ENCODE measurements at regions of chr2 and their contacts with region 1.

Region 1: DNA sequence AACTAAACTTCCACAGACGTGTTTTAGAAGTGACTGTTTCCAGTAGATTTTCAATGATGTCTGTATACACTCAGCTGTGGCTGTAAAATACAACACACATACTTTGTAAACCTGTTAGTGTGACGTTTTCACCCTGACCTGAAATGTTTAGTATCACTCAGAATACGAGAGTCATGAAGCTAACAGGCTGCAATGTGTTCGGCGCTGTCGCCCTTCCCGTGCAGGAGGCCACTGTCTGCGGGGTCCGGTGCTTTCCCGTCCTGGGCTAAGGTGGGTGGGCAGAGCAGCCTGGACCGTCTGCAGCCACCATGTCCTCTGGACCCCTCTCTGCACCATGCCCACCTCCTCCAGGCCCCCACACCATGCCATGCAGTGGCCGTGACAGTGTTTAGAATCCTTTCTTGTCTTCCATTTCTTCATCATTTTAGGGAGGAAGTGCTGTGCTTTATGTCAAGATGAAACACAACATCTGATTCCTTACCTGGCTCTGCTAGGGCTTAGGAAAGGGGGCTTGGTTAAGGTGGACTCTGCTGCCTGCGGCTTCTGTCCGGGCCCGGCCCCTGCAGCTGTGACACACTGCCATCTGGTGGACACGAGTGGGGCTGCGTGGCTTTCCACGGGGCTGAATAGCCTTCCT is 53.8 kb upstream of the RBM44 start:
- DNase-seq: peak; percentile 60 to 81
- H3K4me3 ChIP-seq: no peak overlapping the region
- H3K4me3 Mint-ChIP-seq: no peak overlapping the region
- H3K27ac Mint-ChIP-seq: no peak overlapping the region
- H3K4me1 ChIP-seq: peaks cover 27% of the 10 kb centered on the region
- H3K4me1 Mint-ChIP-seq: peaks cover 25% of the 10 kb centered on the region
- H3K27me3 ChIP-seq: no peaks in the 10 kb centered on the region
- H3K27me3 Mint-ChIP-seq: no peaks in the 10 kb centered on the region
- CTCF ChIP-seq: peak; percentile 77 to 92

Region 2: DNA sequence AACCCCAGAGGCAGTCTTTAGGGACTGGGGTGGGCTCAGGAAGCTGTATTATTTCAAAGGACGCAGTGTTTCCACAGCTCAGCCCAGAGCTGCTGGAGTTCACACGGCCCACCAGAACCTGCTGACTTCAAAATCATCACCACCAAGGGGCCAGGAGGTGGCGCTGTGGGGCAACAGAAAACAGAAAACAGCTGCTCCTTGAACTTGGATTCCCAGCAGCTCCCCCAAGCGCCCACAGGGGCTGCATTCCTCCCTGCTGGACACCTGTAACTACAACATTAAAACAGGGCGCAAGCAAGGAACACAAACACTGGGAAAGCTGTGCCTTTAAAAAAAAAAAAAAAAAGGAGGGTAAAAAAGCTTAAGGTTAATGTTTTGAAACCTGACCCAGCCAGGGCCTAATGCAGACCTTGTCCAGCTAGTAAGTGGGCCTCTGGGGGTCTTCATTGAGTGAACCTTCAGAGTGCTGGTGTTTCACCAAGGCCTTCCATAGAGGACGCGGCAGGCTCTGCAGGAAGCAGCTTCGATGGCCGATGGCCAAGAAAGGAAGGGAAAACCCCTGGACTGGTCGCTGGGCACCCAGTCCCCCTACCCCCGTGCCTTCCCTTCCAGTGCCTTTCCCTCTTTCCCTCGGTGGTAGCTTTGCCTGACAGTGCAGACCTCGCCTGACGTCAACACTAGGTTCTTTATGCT is 231.8 kb before region 1 on chr2:
- CTCF ChIA-PET with region 1: interaction called, 8 read pairs
- POLR2A ChIA-PET with region 1: no interaction called
- intact Hi-C with region 1: loop called (anchors 2 kb)
- DNase-seq: peak; percentile 83 to 84
- H3K4me3 ChIP-seq: no peak overlapping the region
- H3K4me3 Mint-ChIP-seq: no peak overlapping the region
- H3K27ac Mint-ChIP-seq: no peak overlapping the region
- H3K4me1 ChIP-seq: no peaks in the 10 kb centered on the region
- H3K4me1 Mint-ChIP-seq: no peaks in the 10 kb centered on the region
- H3K27me3 ChIP-seq: no peaks in the 10 kb centered on the region
- H3K27me3 Mint-ChIP-seq: no peaks in the 10 kb centered on the region
- CTCF ChIP-seq: peak; percentile 88 to 89

Region 3: DNA sequence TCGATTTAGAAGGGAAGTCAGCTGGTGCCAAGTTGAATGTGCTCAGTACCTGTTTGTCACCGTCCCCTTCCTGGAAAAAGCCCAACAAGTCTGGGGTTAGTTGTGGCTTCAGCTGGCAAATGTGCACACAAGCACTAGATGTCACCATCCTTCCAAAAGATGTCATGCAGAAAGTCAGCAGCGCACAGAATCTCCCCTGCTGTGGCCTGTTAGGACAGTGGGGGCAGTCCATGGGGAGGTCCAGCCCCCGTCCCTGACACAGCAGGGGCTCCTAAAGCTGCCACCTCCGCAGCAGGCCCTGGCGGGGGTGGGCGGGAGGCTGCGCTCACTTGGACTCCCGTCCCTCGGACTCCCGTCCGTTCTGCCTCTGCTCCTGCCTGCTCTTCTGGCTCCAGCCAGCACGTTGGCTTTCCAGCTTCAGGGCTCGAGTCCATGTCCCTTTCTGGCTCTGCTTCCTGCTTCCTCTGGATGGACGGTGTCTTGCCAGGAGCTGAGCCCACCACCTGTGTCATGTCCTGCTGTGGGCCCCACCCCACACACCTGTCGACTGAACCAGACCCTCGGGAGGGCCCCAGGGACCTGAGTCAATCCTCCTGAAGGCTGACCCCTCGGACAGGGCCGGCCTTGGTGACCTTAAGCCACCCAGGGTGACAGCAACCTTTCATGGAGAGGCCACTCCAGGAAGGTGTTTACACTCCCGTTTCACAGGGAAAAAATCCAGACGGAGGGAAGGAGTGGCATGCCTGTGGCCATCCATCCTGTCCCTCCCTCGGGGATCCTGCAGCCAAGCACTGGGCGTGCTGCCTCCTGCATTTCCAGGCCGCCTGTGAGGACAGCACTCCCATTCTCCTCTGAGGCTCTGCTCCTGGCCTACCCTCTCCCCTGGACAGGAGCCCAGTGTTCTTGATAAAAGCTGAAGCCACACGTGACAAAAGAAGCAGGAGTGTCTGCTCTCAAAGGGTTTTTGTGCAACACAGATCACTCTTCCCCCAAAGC is 162.7 kb before region 1 on chr2:
- CTCF ChIA-PET with region 1: interaction called, 4 read pairs
- POLR2A ChIA-PET with region 1: no interaction called
- intact Hi-C with region 1: loop called (anchors 2 kb)
- DNase-seq: peak in 1 of 2 experiments; percentile 32
- H3K4me3 ChIP-seq: no peak overlapping the region
- H3K4me3 Mint-ChIP-seq: no peak overlapping the region
- H3K27ac Mint-ChIP-seq: no peak overlapping the region
- H3K4me1 ChIP-seq: no peaks in the 10 kb centered on the region
- H3K4me1 Mint-ChIP-seq: no peaks in the 10 kb centered on the region
- H3K27me3 ChIP-seq: no peaks in the 10 kb centered on the region
- H3K27me3 Mint-ChIP-seq: no peaks in the 10 kb centered on the region
- CTCF ChIP-seq: peak in 1 of 2 experiments; percentile 27

Region 4: GRCh38 chr2:237600205-237600846 is 144.4 kb before region 1 on chr2:
- CTCF ChIA-PET with region 1: interaction called, 4 read pairs
- POLR2A ChIA-PET with region 1: no interaction called
- intact Hi-C with region 1: loop called (anchors 1 kb)
- DNase-seq: no peak
- H3K4me3 ChIP-seq: no peak overlapping the region
- H3K4me3 Mint-ChIP-seq: no peak overlapping the region
- H3K27ac Mint-ChIP-seq: no peak overlapping the region
- H3K4me1 ChIP-seq: peaks cover 53% of the 10 kb centered on the region
- H3K4me1 Mint-ChIP-seq: peaks cover 30% of the 10 kb centered on the region
- H3K27me3 ChIP-seq: no peaks in the 10 kb centered on the region
- H3K27me3 Mint-ChIP-seq: no peaks in the 10 kb centered on the region
- CTCF ChIP-seq: no peak

Region 5: DNA sequence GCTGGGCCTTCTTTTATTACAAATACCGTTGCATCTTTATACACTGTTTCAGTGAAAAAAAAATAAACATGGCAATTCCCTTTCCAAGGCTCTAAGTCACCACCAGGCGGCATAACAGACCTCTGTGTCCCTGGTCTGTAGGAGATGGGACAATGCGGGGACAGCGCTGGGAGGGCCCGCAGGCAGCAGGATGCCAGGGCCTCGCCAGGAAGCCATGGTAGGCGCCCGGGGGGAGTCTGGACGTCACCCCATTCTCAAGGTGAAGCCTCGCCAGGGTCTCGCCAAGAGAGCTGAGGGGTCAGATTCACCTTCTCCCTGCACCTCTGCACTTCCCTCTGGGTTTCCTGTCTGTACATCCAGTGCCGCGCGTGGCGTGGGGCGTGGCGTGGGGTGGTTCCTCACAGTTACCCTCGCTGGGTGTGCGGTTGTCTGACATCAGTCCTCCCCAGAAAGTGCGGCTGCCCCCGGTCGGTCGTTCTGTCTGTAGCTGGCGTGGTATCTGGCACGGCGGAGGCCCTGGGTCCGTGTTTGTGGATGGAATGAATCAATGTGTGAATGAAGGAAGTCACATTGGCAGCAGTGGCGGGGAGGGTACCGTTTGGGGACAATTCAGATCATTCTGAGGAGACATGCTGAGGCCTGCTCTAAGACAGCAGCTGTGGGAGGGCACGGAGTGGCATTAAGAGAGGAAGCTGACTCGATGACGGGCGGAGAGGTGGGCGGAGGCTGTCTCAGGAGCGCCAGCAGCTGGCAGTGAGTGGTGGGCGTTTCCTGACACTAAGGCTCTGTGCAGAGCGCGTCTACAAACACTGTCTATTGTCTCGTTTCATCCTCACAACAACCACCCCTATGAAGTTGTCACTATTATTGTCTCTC is 71.4 kb before region 1 on chr2:
- CTCF ChIA-PET with region 1: no interaction called
- POLR2A ChIA-PET with region 1: no interaction called
- intact Hi-C with region 1: loop called (anchors 1 kb)
- DNase-seq: no peak
- H3K4me3 ChIP-seq: no peak overlapping the region
- H3K4me3 Mint-ChIP-seq: no peak overlapping the region
- H3K27ac Mint-ChIP-seq: peak overlapping the region; percentile 60
- H3K4me1 ChIP-seq: no peaks in the 10 kb centered on the region
- H3K4me1 Mint-ChIP-seq: no peaks in the 10 kb centered on the region
- H3K27me3 ChIP-seq: no peaks in the 10 kb centered on the region
- H3K27me3 Mint-ChIP-seq: no peaks in the 10 kb centered on the region
- CTCF ChIP-seq: peak; percentile 36 to 39

Region 6: DNA sequence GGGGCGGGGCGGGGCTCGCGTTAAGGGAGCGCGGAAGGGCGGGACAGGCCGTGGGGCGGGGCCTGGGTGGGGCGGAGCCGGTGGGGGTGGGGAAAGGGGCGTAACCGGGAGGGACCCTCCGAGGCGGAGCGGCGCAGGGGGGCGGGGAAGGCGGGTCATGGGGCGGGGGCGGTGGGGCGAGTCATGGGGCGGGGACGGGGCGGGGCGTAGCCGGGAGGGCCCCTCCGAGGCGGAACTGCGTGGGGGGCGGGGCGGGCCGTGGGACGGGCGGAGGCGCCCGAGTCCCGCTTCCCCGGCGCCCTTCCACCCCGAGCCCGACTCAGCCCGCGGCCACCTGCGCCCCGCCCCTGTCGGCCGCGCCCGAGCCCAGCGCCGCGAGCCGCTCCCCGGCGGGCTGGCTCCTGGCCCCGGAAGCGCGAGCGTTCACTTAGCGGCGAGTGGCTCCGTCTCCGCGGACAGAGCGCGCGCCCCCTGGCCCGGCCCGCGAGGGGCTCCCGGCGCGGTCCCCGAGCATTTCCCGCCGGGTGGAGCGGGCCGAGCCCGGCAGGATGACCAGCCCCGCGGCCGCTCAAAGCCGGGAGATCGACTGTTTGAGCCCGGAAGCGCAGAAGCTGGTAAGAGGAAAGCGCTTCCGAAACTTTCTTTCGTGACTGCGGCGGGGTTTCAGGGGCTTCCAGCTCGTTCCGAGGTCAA is 52.7 kb before region 1 on chr2:
- CTCF ChIA-PET with region 1: interaction called, 7 read pairs
- POLR2A ChIA-PET with region 1: no interaction called
- intact Hi-C with region 1: loop called (anchors 5 kb)
- DNase-seq: peak; percentile 87 to 90
- H3K4me3 ChIP-seq: peak overlapping the region; percentile 81
- H3K4me3 Mint-ChIP-seq: peak overlapping the region; percentile 72
- H3K27ac Mint-ChIP-seq: peak overlapping the region; percentile 45
- H3K4me1 ChIP-seq: peaks cover 19% of the 10 kb centered on the region; the same call in 1 of the 2 replicates
- H3K4me1 Mint-ChIP-seq: peaks cover 19% of the 10 kb centered on the region
- H3K27me3 ChIP-seq: no peaks in the 10 kb centered on the region
- H3K27me3 Mint-ChIP-seq: no peaks in the 10 kb centered on the region
- CTCF ChIP-seq: no peak

Region 7: DNA sequence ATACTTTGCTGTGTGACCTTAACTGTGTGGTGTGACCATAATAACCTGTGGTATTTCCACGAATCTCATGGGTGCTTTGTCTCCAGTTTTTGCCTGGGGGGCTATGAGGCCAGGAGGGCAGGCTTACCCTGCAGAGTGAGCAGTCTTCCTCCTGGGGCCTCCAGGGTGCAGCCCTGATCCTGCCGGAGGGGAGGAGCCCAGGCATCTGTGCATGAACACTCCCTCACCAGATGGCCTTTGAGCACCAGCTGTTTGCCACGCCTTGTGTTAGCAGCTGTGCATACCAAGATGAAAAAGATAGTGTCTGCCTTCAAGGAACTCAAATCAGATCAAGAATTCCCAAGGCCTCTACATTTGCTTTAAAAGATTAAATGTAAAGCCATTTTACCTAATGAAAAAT is 21.1 kb before region 1 on chr2:
- CTCF ChIA-PET with region 1: no interaction called
- POLR2A ChIA-PET with region 1: no interaction called
- intact Hi-C with region 1: loop called (anchors 1 kb)
- DNase-seq: peak; percentile 79 to 87
- H3K4me3 ChIP-seq: no peak overlapping the region
- H3K4me3 Mint-ChIP-seq: peak overlapping the region; percentile 30
- H3K27ac Mint-ChIP-seq: peak overlapping the region; percentile 81
- H3K4me1 ChIP-seq: peaks cover 39% of the 10 kb centered on the region
- H3K4me1 Mint-ChIP-seq: peaks cover 18% of the 10 kb centered on the region
- H3K27me3 ChIP-seq: no peaks in the 10 kb centered on the region
- H3K27me3 Mint-ChIP-seq: no peaks in the 10 kb centered on the region
- CTCF ChIP-seq: no peak

Region 8: GRCh38 chr2:237806334-237806733 is 61.6 kb after region 1 on chr2:
- CTCF ChIA-PET with region 1: no interaction called
- POLR2A ChIA-PET with region 1: no interaction called
- intact Hi-C with region 1: no loop called
- DNase-seq: no peak
- H3K4me3 ChIP-seq: no peak overlapping the region
- H3K4me3 Mint-ChIP-seq: no peak overlapping the region
- H3K27ac Mint-ChIP-seq: no peak overlapping the region
- H3K4me1 ChIP-seq: no peaks in the 10 kb centered on the region
- H3K4me1 Mint-ChIP-seq: no peaks in the 10 kb centered on the region
- H3K27me3 ChIP-seq: no peaks in the 10 kb centered on the region
- H3K27me3 Mint-ChIP-seq: peaks cover 13% of the 10 kb centered on the region
- CTCF ChIP-seq: no peak